GM12878 (cell line): ENCODE measurements at regions of chr2 and their contacts with region 1.

Region 1: DNA sequence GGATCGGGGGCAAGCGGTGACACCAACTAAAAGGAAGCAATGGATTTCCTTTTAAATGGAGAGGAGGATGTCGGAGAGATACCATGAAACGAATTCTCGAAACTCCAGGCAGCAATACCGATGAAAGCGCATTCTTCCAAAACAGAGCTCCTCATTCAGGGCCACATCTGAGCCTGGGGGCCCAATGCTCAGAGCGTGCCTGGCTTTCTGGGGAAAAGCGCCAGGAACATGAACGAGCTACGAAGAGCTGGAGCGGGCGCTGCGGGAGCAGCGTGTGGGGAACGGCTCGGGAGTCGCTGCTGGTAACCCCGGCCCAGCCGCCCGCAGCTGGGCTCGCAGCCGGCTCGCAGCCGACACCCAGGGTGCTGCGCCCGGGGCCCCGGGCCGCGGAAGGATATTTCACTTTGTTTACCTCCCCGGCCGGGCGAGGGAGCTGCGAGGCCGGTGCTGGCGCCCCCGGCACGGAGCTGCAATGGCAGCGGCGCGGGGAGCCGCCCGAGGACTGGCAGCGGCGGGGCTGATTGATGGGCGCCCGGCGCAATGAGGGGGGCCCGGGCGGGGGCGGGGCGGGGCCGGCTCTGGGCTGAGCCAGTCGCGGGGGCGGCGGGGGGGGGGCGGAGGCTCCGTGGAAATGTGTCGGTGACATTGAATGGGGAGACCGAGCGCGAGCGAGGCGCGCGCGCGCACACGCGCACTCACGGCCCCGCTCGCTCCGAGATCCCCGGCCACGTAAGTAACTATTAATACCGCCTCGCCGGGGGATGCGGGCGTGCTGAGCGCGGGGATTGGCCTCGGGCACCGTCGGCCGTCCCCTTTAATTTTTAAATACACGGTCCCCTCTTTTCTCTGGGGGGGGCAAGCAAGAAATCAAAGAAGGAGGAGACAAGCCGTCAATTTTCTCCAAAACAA is at the start of gene TRIB2:
- DNase-seq: no peak
- ATAC-seq: peak; percentile 85
- H3K4me3 ChIP-seq: peak within 1 kb of the TSS; percentile 87
- H3K27ac ChIP-seq: no peak within 1 kb of the TSS
- H3K4me1 ChIP-seq: peaks cover 3% of the 10 kb centered on the region; the same call in 1 of the 2 replicates
- H3K27me3 ChIP-seq: peaks cover 0 to 18% of the 10 kb centered on the region in 2 experiments; a peak in 3 of 4 replicates
- CTCF ChIP-seq: peak in 2 of 3 experiments; percentile 12 to 35; a peak in 2 of 6 replicates
- EP300 ChIP-seq: no peak
- POLR2A ChIP-seq: peak; percentile 54
- RAD21 ChIP-seq: 0 out of 2 replicates have a peak, but pooled peaks have one; percentile 34
- polyA plus RNA-seq, gene TRIB2: 1.6 to 3.5 TPM

Region 2: DNA sequence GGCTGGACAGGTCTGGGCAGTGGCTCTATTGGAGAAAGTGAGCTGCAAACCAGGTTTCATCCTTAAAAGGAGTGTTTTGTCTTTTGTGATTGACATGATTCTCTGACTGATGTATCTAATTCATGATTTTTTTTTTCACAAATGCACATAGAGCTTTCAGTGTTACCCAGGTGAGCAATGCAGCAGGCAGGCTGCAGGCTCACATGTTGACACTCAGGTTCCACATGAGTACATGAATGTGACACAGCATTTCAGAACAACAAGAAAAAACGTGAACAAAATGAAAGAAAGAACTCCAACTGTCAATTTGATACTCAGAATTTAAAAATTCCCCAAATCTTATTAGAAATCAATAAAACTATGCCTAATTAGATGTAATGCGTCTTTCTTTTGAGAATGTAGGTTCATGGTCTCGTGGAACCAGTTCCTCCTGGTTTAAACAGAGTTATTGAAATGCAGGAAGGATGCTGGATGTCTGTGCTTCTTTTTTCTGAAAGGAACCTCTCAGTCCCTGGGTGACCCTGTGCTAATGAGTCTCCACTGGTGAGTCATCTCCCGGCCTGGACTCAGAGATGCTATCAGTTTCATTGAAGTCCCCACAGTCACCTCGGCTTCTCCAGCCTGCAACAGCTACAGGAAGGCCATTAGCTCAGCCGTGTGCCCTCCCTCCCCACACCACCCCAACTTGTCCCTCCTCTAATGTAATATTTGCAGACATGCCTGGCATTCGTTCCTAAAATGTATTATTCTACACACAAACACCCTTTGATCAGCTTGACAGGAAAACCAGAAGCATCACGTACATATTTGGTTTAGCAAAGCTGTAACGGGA is 539.7 kb before region 1 on chr2:
- CTCF ChIA-PET with region 1: interaction called, 3 read pairs
- POLR2A ChIA-PET with region 1: no interaction called
- RAD21 ChIA-PET with region 1: interaction called, 3 read pairs
- SMC1A ChIA-PET with region 1: no interaction called
- in situ Hi-C with region 1: no loop called
- intact Hi-C with region 1: loop called (anchors 5 kb)
- DNase-seq: peak; percentile 45
- ATAC-seq: peak; percentile 97
- H3K4me3 ChIP-seq: no peak overlapping the region
- H3K27ac ChIP-seq: no peak overlapping the region
- H3K4me1 ChIP-seq: peaks cover 10% of the 10 kb centered on the region
- H3K27me3 ChIP-seq: no peaks in the 10 kb centered on the region
- CTCF ChIP-seq: no peak
- EP300 ChIP-seq: no peak
- POLR2A ChIP-seq: no peak
- RAD21 ChIP-seq: no peak

Region 3: GRCh38 chr2:12293874-12294273 is 422.7 kb before region 1 on chr2:
- CTCF ChIA-PET with region 1: no interaction called
- POLR2A ChIA-PET with region 1: interaction called, 3 read pairs
- RAD21 ChIA-PET with region 1: interaction called, 5 read pairs
- SMC1A ChIA-PET with region 1: interaction called, 11 read pairs
- in situ Hi-C with region 1: no loop called
- intact Hi-C with region 1: no loop called
- DNase-seq: peak; percentile 84
- ATAC-seq: peak; percentile 99
- H3K4me3 ChIP-seq: no peak overlapping the region
- H3K27ac ChIP-seq: peak overlapping the region; percentile 58
- H3K4me1 ChIP-seq: peaks cover 13% of the 10 kb centered on the region
- H3K27me3 ChIP-seq: no peaks in the 10 kb centered on the region
- CTCF ChIP-seq: no peak
- EP300 ChIP-seq: peak; percentile 42 to 96; a peak in 3 of 4 replicates
- POLR2A ChIP-seq: no peak
- RAD21 ChIP-seq: no peak

Region 4: DNA sequence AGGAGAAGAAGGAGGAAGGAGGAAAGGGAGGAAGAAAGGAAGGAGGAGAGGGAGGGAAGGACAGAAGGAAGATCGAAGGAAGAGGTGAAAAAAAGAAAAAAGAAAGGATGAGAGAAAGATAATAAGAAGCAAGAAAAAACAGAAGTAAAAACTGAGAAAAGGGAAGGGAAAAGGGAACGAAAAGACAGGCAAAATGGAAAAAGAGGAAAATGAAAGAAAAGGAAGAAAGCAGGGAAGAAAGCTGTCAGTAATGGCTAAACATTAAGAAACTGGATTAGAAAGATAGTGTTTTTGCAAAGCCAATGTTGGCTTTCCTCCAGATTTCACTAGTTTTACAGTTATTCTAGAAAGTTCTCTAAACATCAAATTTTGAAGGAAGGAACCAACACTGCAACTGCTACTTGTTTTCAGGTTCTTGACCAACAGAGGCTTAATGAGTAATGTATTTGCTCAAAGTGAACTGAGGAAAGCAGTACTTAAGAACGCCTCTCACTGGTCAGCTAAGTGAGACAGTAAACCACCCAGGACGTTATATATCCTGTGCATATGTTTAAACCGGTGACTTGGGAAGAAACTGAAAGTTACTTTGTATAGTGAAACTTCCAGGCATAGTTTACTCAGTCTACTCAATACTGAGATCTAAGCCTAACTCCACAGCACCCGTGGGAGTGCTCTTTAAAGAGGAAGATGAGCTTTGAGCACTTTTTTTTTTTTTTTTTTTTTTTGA is 286.0 kb before region 1 on chr2:
- CTCF ChIA-PET with region 1: interaction called, 13 read pairs
- POLR2A ChIA-PET with region 1: no interaction called
- RAD21 ChIA-PET with region 1: interaction called, 13 read pairs
- SMC1A ChIA-PET with region 1: interaction called, 3 read pairs
- in situ Hi-C with region 1: no loop called
- intact Hi-C with region 1: loop called (anchors 2 kb)
- DNase-seq: peak; percentile 91
- ATAC-seq: peak; percentile 99
- H3K4me3 ChIP-seq: no peak overlapping the region
- H3K27ac ChIP-seq: no peak overlapping the region; the same call in 1 of the 2 replicates
- H3K4me1 ChIP-seq: no peaks in the 10 kb centered on the region
- H3K27me3 ChIP-seq: no peaks in the 10 kb centered on the region
- CTCF ChIP-seq: peak in 1 of 3 experiments; percentile 12; a peak in 1 of 6 replicates
- EP300 ChIP-seq: no peak
- POLR2A ChIP-seq: no peak
- RAD21 ChIP-seq: peak; percentile 15; the same call in 1 of the 2 replicates

Region 5: DNA sequence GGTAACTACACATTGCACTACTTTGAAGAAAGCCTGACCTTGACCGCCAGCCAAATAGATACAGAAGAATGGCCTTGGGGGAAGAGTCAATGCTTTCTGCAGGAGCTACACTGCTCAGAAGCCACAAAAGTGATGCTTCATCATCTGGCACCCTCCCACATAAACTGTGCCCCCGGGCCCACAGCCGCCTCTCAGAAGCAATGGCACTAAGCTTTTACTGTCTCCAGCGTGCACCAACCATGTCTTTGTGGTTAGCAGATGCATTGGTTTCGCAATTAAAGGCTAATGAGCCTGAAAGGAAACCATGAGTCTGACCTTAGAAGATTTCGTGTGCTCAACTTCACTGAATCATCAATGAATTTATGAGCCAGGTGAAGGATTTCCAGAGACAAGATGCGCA is 209.2 kb before region 1 on chr2:
- CTCF ChIA-PET with region 1: interaction called, 13 read pairs
- POLR2A ChIA-PET with region 1: no interaction called
- RAD21 ChIA-PET with region 1: interaction called, 3 read pairs
- SMC1A ChIA-PET with region 1: no interaction called
- in situ Hi-C with region 1: no loop called
- intact Hi-C with region 1: loop called (anchors 2 kb)
- DNase-seq: peak; percentile 76
- ATAC-seq: peak; percentile 97
- H3K4me3 ChIP-seq: no peak overlapping the region
- H3K27ac ChIP-seq: no peak overlapping the region
- H3K4me1 ChIP-seq: peaks cover 33% of the 10 kb centered on the region
- H3K27me3 ChIP-seq: no peaks in the 10 kb centered on the region
- CTCF ChIP-seq: no peak
- EP300 ChIP-seq: peak; percentile 39 to 54; a peak in 2 of 4 replicates
- POLR2A ChIP-seq: no peak
- RAD21 ChIP-seq: no peak

Region 6: DNA sequence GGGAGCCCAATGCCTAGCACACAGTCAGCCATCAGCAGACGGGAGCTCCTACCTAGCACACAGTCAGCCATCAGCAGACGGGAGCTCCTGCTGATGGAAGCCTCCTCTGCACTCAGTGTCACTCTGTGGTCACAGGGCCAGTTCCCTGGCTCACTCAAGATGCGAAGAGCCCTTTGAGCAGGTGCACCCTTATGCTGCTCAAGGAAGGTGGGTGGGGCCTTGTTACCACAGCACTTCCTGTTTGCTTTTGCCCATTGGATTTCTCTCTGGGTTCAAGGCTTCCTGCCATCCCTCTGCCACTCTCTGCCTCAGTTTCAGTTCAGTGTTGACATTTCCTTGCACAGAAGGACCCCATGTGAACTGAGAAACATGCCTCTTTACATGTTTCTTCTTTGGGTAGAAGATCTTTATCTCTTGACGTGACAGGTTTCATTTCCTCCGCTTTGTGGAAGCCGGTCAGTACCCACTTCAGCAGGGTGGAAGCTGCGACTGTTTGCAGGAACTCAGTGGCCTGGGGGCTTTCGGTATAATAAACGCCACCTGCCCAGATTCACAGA is 11.8 kb after region 1 on chr2:
- CTCF ChIA-PET with region 1: interaction called, 27 read pairs
- POLR2A ChIA-PET with region 1: no interaction called
- RAD21 ChIA-PET with region 1: interaction called, 11 read pairs
- SMC1A ChIA-PET with region 1: interaction called, 6 read pairs
- in situ Hi-C with region 1: no loop called
- intact Hi-C with region 1: no loop called
- DNase-seq: peak; percentile 93
- ATAC-seq: peak; percentile 92
- H3K4me3 ChIP-seq: no peak overlapping the region
- H3K27ac ChIP-seq: no peak overlapping the region
- H3K4me1 ChIP-seq: peaks cover 14% of the 10 kb centered on the region
- H3K27me3 ChIP-seq: no peaks in the 10 kb centered on the region
- CTCF ChIP-seq: no peak
- EP300 ChIP-seq: peak in 1 of 2 experiments; percentile 11; a peak in 1 of 4 replicates
- POLR2A ChIP-seq: no peak
- RAD21 ChIP-seq: no peak

Region 7: GRCh38 chr2:13006829-13007717 is 290.5 kb after region 1 on chr2:
- CTCF ChIA-PET with region 1: interaction called, 6 read pairs
- POLR2A ChIA-PET with region 1: no interaction called
- RAD21 ChIA-PET with region 1: interaction called, 8 read pairs
- SMC1A ChIA-PET with region 1: interaction called, 7 read pairs
- in situ Hi-C with region 1: no loop called
- intact Hi-C with region 1: loop called (anchors 5 kb)
- DNase-seq: no peak
- ATAC-seq: peak; percentile 93
- H3K4me3 ChIP-seq: no peak overlapping the region
- H3K27ac ChIP-seq: no peak overlapping the region
- H3K4me1 ChIP-seq: no peaks in the 10 kb centered on the region
- H3K27me3 ChIP-seq: no peaks in the 10 kb centered on the region; a peak in 1 of 4 replicates
- CTCF ChIP-seq: peak; percentile 65 to 78 (median 69)
- EP300 ChIP-seq: no peak
- POLR2A ChIP-seq: no peak
- RAD21 ChIP-seq: peak; percentile 75